ENCODE measurements at regions of chr9 and their contacts with region 1.

Region 1: GRCh38 chr9:68844631-68845612 is 139.9 kb downstream of the PIP5K1B start:
- DNase-seq: no peak
- H3K4me3 Mint-ChIP-seq: no peak overlapping the region
- H3K27ac Mint-ChIP-seq: peak overlapping the region; percentile 51
- H3K4me1 Mint-ChIP-seq: peaks cover 42% of the 10 kb centered on the region
- H3K27me3 Mint-ChIP-seq: no peaks in the 10 kb centered on the region

Region 2: GRCh38 chr9:68895741-68896478 is 51.0 kb after region 1 on chr9:
- intact Hi-C with region 1: loop called (anchors 5 kb)
- DNase-seq: no peak
- H3K4me3 Mint-ChIP-seq: peak overlapping the region; percentile 78
- H3K27ac Mint-ChIP-seq: peak overlapping the region; percentile 94
- H3K4me1 Mint-ChIP-seq: peaks cover 57% of the 10 kb centered on the region
- H3K27me3 Mint-ChIP-seq: no peaks in the 10 kb centered on the region